CD8-positive, alpha-beta memory T cell (primary cell): ENCODE measurements at regions of chr2 and their contacts with region 1.

Region 1: GRCh38 chr2:190664240-190664639 is 15.4 kb downstream of the NAB1 start:
- DNase-seq: no peak
- H3K4me3 ChIP-seq: no peak overlapping the region
- H3K4me3 Mint-ChIP-seq: no peak overlapping the region
- H3K27ac ChIP-seq: no peak overlapping the region
- H3K27ac Mint-ChIP-seq: peak overlapping the region in 1 of 8 donors; percentile 54
- H3K4me1 ChIP-seq: peaks cover 18% of the 10 kb centered on the region
- H3K4me1 Mint-ChIP-seq: peaks cover 34 to 68% (median 64%) of the 10 kb centered on the region in 3 donors
- H3K27me3 ChIP-seq: no peaks in the 10 kb centered on the region
- H3K27me3 Mint-ChIP-seq: peaks cover 0 to 2% of the 10 kb centered on the region in 2 donors

Region 2: GRCh38 chr2:190627448-190628412 is 36.5 kb before region 1 on chr2:
- CTCF ChIA-PET with region 1: no interaction called
- POLR2A ChIA-PET with region 1: no interaction called
- DNase-seq: peak in 2 of 5 donors; percentile 18 to 42
- H3K4me3 ChIP-seq: peak overlapping the region; percentile 51
- H3K4me3 Mint-ChIP-seq: peak overlapping the region; percentile 86 to 95 (median 90)
- H3K27ac ChIP-seq: no peak overlapping the region
- H3K27ac Mint-ChIP-seq: peak overlapping the region in 5 of 8 donors; percentile 37 to 89 (median 69)
- H3K4me1 ChIP-seq: peaks cover 4% of the 10 kb centered on the region
- H3K4me1 Mint-ChIP-seq: peaks cover 22 to 31% (median 25%) of the 10 kb centered on the region in 3 donors
- H3K27me3 ChIP-seq: no peaks in the 10 kb centered on the region
- H3K27me3 Mint-ChIP-seq: peaks cover 0 to 30% of the 10 kb centered on the region in 2 donors

Region 3: GRCh38 chr2:190653931-190654330 is 10.3 kb before region 1 on chr2:
- CTCF ChIA-PET with region 1: interaction called, 3 read pairs
- POLR2A ChIA-PET with region 1: interaction called, 18 read pairs
- DNase-seq: no peak
- H3K4me3 ChIP-seq: no peak overlapping the region
- H3K4me3 Mint-ChIP-seq: no peak overlapping the region
- H3K27ac ChIP-seq: no peak overlapping the region
- H3K27ac Mint-ChIP-seq: no peak overlapping the region
- H3K4me1 ChIP-seq: peaks cover 25% of the 10 kb centered on the region
- H3K4me1 Mint-ChIP-seq: peaks cover 46 to 66% (median 64%) of the 10 kb centered on the region in 3 donors
- H3K27me3 ChIP-seq: no peaks in the 10 kb centered on the region
- H3K27me3 Mint-ChIP-seq: no peaks in the 10 kb centered on the region